ENCODE measurements at regions of chrX and their contacts with region 1.

Region 1: GRCh38 chrX:115642895-115643530 is 82.0 kb downstream of the PLS3 start:
- DNase-seq: peak; percentile 39
- ATAC-seq: no peak
- H3K4me3 Mint-ChIP-seq: no peak overlapping the region
- H3K27ac Mint-ChIP-seq: no peak overlapping the region
- H3K4me1 Mint-ChIP-seq: no peaks in the 10 kb centered on the region
- H3K27me3 Mint-ChIP-seq: no peaks in the 10 kb centered on the region

Region 2: GRCh38 chrX:115330498-115331168 is 312.4 kb before region 1 on chrX:
- CTCF ChIA-PET with region 1: interaction called, 16 read pairs
- POLR2A ChIA-PET with region 1: no interaction called
- DNase-seq: peak; percentile 22
- ATAC-seq: no peak
- H3K4me3 Mint-ChIP-seq: no peak overlapping the region
- H3K27ac Mint-ChIP-seq: no peak overlapping the region
- H3K4me1 Mint-ChIP-seq: no peaks in the 10 kb centered on the region
- H3K27me3 Mint-ChIP-seq: no peaks in the 10 kb centered on the region

Region 3: DNA sequence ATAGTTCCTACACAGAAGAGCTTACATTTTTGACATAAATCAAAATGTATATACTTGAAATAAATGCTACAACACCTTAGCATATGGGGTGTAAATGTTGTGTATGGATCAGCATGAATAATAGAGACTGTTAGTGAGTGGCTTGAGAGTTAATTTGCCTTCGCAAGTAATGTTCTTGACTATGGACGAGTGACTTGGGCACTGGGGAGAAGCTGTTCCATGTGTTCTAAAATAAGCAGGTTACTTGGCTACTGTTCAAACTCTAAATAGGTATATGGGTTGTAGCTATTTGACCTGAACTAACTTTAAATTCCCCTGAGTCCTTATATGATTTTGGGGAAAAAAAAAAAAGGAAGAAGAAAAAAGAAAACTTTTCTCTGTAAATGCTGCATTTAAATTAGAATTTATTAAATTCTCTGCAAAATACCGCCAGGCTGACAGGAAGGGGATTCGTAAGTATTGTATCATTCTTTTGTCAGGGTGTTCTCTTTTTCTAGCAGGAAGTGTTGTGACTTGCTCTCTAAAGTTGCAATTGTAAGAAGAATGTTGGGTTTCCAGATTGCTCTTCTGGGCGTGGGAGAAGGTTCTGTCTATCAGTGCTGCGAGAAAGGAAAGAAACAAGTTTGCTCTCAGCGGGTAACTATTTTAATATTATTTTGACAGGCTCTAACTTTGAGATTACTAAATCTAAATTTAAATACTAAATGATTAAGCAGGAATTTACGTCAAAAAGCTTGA is 49.8 kb before region 1 on chrX:
- CTCF ChIA-PET with region 1: no interaction called
- POLR2A ChIA-PET with region 1: no interaction called
- DNase-seq: no peak
- ATAC-seq: no peak
- H3K4me3 Mint-ChIP-seq: no peak overlapping the region
- H3K27ac Mint-ChIP-seq: no peak overlapping the region
- H3K4me1 Mint-ChIP-seq: no peaks in the 10 kb centered on the region
- H3K27me3 Mint-ChIP-seq: no peaks in the 10 kb centered on the region

Region 4: DNA sequence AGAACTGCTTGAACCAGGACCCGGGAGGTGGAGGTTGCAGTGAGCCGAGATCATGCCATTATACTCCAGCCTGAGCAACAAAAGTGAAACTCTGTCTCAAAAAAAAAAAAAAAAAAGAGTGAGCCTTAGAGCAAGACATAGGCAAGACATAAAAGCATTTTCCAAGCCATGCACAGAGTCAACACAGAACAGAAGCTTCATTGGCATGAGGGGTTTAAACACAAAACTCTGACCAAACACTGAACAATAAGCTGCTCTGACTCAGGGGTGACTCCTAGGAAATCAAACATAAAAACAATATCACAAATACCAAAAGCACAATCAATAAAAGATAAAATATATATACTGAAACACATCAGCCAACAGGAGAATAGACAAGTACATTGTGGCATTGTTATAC is 54.8 kb after region 1 on chrX:
- CTCF ChIA-PET with region 1: no interaction called
- POLR2A ChIA-PET with region 1: no interaction called
- DNase-seq: no peak
- ATAC-seq: no peak
- H3K4me3 Mint-ChIP-seq: no peak overlapping the region
- H3K27ac Mint-ChIP-seq: no peak overlapping the region
- H3K4me1 Mint-ChIP-seq: no peaks in the 10 kb centered on the region
- H3K27me3 Mint-ChIP-seq: no peaks in the 10 kb centered on the region

Measured in activated CD8-positive, alpha-beta T cell treated with anti-CD3 and anti-CD28 coated beads, Interleukin-2, amount 10 ng/mL, durations not matched to agents 7 days and 5 days (primary cell).